Endothelial cell of umbilical vein (primary cell): ENCODE measurements at regions of chr12 and their contacts with region 1.

Region 1: GRCh38 chr12:128554546-128555304 is 269.0 kb downstream of the SLC15A4 start:
- DNase-seq: no peak
- H3K4me3 ChIP-seq: no peak overlapping the region
- H3K27ac ChIP-seq: no peak overlapping the region
- H3K4me1 ChIP-seq: no peaks in the 10 kb centered on the region
- H3K27me3 ChIP-seq: no peaks in the 10 kb centered on the region
- CTCF ChIP-seq: no peak
- POLR2A ChIP-seq: no peak

Region 2: DNA sequence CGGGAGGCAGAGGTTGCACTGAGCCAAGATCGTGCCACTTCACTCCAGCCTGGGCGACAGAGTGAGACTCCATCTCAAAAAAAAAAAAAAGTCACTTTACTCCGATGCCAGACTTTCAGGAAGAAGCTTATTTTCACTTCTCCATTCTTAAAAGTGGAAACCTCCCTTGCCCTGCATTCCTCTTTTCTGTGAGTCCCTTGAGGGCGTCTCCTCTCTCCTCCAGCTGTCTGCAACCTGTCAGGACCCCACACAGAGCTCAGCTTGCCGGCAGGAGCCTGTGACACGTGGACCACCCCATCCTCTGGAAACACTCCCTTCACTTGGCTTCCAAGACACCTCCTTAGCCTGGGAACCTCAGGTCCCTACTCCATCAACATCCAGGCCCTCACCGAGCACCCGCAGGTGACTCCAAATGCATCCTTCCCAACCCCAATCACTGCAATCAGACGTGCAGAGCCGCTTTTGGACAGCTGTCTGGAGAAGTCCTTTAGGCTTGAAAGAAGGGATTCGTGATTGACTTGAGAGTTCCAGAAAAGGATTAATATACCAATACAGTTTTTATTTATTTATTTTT is 234.7 kb after region 1 on chr12:
- CTCF ChIA-PET with region 1: no interaction called
- POLR2A ChIA-PET with region 1: interaction called, 11 read pairs
- dilution Hi-C with region 1: no loop called
- intact Hi-C with region 1: no loop called
- DNase-seq: no peak
- H3K4me3 ChIP-seq: no peak overlapping the region
- H3K27ac ChIP-seq: no peak overlapping the region
- H3K4me1 ChIP-seq: peaks cover 8% of the 10 kb centered on the region
- H3K27me3 ChIP-seq: no peaks in the 10 kb centered on the region
- CTCF ChIP-seq: no peak
- POLR2A ChIP-seq: no peak